H1 (cell line): ENCODE measurements at regions of chr19 and their contacts with region 1.

Region 1: DNA sequence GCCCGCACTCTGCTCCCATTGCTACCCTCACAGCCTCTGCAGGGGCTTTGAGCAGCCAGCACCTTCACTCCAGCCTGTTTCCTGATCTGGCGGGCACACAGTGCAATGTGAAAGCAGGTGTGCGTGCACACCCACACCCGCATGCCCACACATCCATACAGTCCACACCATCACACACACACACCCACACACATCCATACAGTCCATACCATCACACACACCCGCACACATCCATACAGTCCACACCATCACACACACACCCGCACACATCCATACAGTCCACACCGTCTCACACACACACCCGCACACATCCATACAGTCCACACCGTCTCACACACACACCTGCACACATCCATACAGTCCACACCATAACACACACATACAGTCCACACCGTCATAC is 28.0 kb downstream of the PIAS4 start:
- DNase-seq: no peak
- H3K4me3 ChIP-seq: no peak overlapping the region
- H3K27ac ChIP-seq: no peak overlapping the region
- H3K4me1 ChIP-seq: no peaks in the 10 kb centered on the region
- H3K27me3 ChIP-seq: no peaks in the 10 kb centered on the region
- CTCF ChIP-seq: no peak
- EP300 ChIP-seq: no peak
- POLR2A ChIP-seq: no peak
- RAD21 ChIP-seq: no peak

Region 2: DNA sequence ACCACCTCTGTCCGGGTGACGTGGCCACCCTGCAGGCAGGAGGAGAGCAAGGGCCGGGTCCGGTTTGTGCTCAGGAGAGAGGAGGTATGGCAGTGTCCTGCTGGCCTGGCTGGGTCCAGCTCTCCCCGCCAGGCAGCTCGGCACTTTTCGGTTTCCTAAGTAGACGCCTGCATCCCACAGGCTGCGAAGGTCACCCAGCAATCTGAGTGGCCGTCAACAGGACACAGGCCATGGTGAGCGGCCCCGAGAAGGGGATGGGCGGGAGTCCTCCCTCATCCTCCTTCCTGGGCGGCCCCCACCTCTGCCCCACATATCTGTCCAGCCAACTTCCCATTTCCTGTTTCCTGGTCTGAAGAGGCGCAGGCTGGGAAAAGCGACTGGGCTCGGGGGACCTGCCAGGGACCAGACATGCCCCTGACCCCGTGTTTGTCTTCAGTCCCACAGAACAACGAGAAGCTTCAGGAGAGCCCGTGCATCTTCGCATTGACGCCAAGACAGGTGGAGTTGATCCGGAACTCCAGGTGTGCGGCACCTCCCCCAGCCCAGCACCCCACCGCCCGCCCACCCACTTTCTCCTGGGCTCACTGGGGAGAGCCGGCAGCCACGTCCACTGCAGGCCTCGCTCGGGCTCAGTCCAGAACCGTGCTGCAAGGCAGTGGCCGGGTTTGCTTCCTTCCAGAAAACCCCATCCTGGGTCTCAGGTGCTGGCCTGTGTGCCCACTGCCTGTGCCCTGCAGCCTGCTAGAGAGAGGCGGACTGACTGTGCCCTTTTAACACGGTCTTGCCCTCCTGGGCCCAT is 11.8 kb before region 1 on chr19:
- CTCF ChIA-PET with region 1: no interaction called
- POLR2A ChIA-PET with region 1: interaction called, 18 read pairs
- DNase-seq: no peak
- H3K4me3 ChIP-seq: no peak overlapping the region
- H3K27ac ChIP-seq: no peak overlapping the region; the same call in 1 of the 2 replicates
- H3K4me1 ChIP-seq: no peaks in the 10 kb centered on the region
- H3K27me3 ChIP-seq: no peaks in the 10 kb centered on the region
- CTCF ChIP-seq: no peak
- EP300 ChIP-seq: no peak
- POLR2A ChIP-seq: no peak
- RAD21 ChIP-seq: no peak